Esophagus squamous epithelium (tissue), 5 donors: ENCODE measurements at regions of chr9 and their contacts with region 1.

Region 1: DNA sequence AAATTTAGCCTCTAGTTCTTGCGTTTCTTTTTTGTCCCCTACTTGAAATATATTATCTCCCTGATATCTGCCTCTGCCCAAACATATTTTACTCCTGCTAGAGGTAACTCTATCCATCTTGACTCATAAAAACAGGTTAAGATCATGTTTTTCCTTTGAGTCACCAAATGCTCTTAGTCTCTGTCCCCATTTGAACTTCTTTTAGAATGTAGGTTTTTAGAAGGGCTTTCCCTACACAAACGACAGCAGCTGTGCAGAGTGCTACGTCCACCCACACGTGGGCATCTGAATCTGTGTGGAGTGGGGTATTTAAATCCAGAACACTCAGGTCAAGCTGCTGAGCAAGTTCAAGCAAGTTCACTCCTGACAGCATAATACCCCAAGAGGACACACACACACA is 2.2 kb downstream of the HSD17B3 start:
- DNase-seq: no peak
- H3K4me3 ChIP-seq: no peak overlapping the region
- H3K27ac ChIP-seq: no peak overlapping the region
- H3K4me1 ChIP-seq: no peaks in the 10 kb centered on the region
- H3K27me3 ChIP-seq: no peaks in the 10 kb centered on the region
- CTCF ChIP-seq: no peak
- POLR2A ChIP-seq: no peak

Region 2: DNA sequence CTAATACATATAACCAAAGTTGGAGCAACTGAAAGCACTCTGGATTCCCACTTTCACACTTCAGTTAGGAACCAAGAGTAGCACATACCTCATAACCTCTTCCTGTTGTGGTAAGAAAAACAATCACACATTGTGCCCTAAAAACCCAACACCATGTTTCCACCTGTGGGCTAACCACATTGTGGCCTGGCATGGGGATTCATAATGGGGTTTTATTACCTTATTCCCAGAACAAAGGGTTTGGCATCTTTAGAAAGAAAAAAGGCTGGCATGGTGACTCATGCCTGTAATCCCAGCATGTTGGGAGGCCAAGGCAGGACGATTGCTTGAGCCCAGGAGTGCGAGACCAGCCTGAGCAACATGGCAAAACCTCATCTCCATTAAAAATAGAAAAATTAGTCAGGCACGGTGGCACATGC is 58.4 kb before region 1 on chr9:
- intact Hi-C with region 1: loop called (anchors 10 kb)
- DNase-seq: no peak
- H3K4me3 ChIP-seq: no peak overlapping the region
- H3K27ac ChIP-seq: no peak overlapping the region
- H3K4me1 ChIP-seq: no peaks in the 10 kb centered on the region
- H3K27me3 ChIP-seq: peaks cover 0 to 29% (median 0%) of the 10 kb centered on the region in 4 donors
- CTCF ChIP-seq: no peak
- POLR2A ChIP-seq: no peak

Region 3: DNA sequence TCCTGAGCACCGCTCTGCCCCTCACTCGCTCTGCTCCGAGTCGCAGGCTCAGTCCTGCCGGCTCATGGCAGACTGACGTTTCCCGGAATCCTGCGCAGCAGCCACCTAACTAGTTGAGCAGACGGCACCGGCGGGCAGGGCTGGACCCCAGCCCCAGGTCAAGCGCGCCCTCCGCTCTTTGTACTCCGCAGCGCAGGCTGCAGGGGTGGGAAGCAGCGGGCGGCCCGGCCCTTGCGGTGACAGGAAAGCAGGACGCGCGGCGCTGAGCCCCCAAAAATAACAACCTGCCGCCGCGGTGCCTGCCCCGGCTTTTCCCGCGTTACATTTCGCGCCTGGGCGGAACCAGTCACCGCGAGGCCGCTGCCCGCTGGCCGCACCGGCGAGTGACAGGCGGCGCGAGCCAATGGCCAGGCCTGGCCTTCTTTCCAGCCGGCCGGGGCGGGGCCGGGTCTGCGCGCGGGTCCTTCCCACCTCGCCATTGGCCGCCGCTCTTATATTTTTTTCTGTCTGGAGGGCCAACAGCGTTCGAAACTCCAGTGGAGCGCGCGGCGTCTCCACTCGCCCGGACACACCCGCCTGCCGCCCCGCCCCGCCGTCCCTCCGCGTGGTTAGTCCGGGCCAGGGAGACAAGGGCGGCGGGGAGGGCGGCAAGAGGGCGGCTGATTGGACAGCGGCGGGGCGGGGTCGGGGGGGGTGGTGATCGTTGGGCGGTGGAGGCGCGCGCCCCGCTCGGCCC is 118.4 kb after region 1 on chr9 and contains the start of gene ZNF367:
- intact Hi-C with region 1: no loop called
- DNase-seq: peak; percentile 85
- H3K4me3 ChIP-seq: peak within 1 kb of the TSS; percentile 71 to 89 (median 80)
- H3K27ac ChIP-seq: peak within 1 kb of the TSS; percentile 97 to 100 (median 99)
- H3K4me1 ChIP-seq: peaks cover 13 to 50% (median 24%) of the 10 kb centered on the region in 3 donors
- H3K27me3 ChIP-seq: no peaks in the 10 kb centered on the region
- CTCF ChIP-seq: no peak
- POLR2A ChIP-seq: peak in 3 of 4 donors; percentile 22 to 71 (median 52)
- total RNA-seq, gene ZNF367: 2.2 to 7.1 (median 4.6) TPM